Activated CD4-positive, alpha-beta memory T cell treated with anti-CD3 and anti-CD28 coated beads for 36 hours (primary cell): ENCODE measurements at regions of chr9 and their contacts with region 1.

Region 1: GRCh38 chr9:131668439-131669268 is 71.2 kb downstream of the RAPGEF1 start:
- DNase-seq: peak; percentile 86
- H3K4me3 Mint-ChIP-seq: peak overlapping the region; percentile 67
- H3K27ac Mint-ChIP-seq: peak overlapping the region; percentile 99
- H3K4me1 Mint-ChIP-seq: peaks cover 94% of the 10 kb centered on the region
- H3K27me3 Mint-ChIP-seq: no peaks in the 10 kb centered on the region

Region 2: DNA sequence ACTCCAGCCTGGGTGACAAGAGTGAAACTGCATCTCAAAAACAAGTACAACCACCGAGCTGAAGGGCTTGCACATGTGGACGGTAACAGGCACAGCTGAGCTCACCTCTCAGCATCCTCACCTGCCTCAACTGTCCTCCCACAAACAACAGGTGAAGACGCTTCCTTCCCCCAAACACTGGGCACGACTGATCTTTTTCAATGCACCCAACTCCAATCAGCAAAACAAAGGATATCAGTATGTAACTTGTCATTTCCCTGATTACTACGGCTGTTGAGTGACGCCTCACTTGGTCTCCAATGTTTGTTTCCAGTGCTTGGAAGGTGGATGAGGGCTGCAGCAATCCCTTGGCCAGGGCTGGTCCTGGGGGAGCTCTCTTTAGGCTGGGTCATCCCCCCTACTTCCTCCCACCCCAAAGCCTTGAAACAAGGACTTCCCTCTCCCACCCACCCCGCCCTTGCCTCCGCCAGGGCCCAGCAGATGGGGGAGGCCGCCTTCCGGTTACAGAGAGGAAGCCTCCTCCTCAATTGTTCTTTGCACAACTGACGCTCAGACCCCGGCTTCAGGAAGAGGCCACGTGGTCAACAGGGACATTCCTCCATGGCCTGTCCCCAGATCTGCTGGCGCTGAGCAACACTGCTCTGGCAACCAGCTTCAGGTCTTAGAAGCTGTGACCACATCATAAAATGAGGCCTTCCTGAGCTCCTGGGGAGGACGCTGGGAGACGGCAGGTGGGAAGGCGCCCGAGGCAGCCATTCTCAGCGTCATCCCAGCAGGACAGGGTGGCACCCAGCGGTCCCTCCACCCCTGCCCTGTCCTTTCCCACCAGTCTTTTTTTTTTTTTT is 398.3 kb before region 1 on chr9:
- CTCF ChIA-PET with region 1: no interaction called
- POLR2A ChIA-PET with region 1: no interaction called
- intact Hi-C with region 1: loop called (anchors 5 kb)
- DNase-seq: peak; percentile 80
- H3K4me3 Mint-ChIP-seq: peak overlapping the region; percentile 99
- H3K27ac Mint-ChIP-seq: peak overlapping the region; percentile 97
- H3K4me1 Mint-ChIP-seq: peaks cover 56% of the 10 kb centered on the region
- H3K27me3 Mint-ChIP-seq: no peaks in the 10 kb centered on the region

Region 3: GRCh38 chr9:131590908-131591844 is 77.5 kb before region 1 on chr9:
- CTCF ChIA-PET with region 1: interaction called, 5 read pairs
- POLR2A ChIA-PET with region 1: no interaction called
- intact Hi-C with region 1: loop called (anchors 5 kb)
- DNase-seq: peak; percentile 87
- H3K4me3 Mint-ChIP-seq: no peak overlapping the region
- H3K27ac Mint-ChIP-seq: peak overlapping the region; percentile 72
- H3K4me1 Mint-ChIP-seq: peaks cover 27% of the 10 kb centered on the region
- H3K27me3 Mint-ChIP-seq: no peaks in the 10 kb centered on the region

Region 4: GRCh38 chr9:131645078-131645776 is 23.4 kb before region 1 on chr9:
- CTCF ChIA-PET with region 1: interaction called, 13 read pairs
- POLR2A ChIA-PET with region 1: interaction called, 29 read pairs
- intact Hi-C with region 1: loop called (anchors 1 kb)
- DNase-seq: peak; percentile 65
- H3K4me3 Mint-ChIP-seq: peak overlapping the region; percentile 43
- H3K27ac Mint-ChIP-seq: peak overlapping the region; percentile 94
- H3K4me1 Mint-ChIP-seq: peaks cover 68% of the 10 kb centered on the region
- H3K27me3 Mint-ChIP-seq: no peaks in the 10 kb centered on the region

Region 5: DNA sequence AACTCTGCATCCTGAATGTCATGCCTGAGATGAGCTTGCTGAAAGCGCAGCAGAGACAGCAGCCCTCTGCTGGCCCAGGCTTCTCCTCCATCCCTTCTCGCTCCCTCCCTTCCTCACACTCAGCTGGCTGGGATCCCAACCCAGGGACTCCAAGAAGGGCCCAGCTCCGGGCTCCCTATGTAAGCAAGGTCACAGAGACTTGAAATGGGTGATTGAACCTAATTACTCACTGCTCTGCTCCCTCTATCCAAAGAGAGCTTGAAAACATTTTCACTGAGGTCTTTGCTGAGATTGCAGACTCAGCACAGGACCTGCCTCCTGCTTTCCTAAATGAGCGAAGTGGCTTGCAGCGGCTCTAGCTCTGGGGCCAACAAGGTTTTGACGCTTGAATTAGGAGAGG is 28.4 kb after region 1 on chr9:
- CTCF ChIA-PET with region 1: no interaction called
- POLR2A ChIA-PET with region 1: no interaction called
- intact Hi-C with region 1: no loop called
- DNase-seq: no peak
- H3K4me3 Mint-ChIP-seq: no peak overlapping the region
- H3K27ac Mint-ChIP-seq: no peak overlapping the region
- H3K4me1 Mint-ChIP-seq: peaks cover 86% of the 10 kb centered on the region
- H3K27me3 Mint-ChIP-seq: no peaks in the 10 kb centered on the region

Region 6: GRCh38 chr9:131709771-131710454 is 41.3 kb after region 1 on chr9:
- CTCF ChIA-PET with region 1: interaction called, 9 read pairs
- POLR2A ChIA-PET with region 1: interaction called, 30 read pairs
- intact Hi-C with region 1: loop called (anchors 1 kb)
- DNase-seq: peak; percentile 73
- H3K4me3 Mint-ChIP-seq: peak overlapping the region; percentile 62
- H3K27ac Mint-ChIP-seq: peak overlapping the region; percentile 96
- H3K4me1 Mint-ChIP-seq: peaks cover 86% of the 10 kb centered on the region
- H3K27me3 Mint-ChIP-seq: no peaks in the 10 kb centered on the region

Region 7: DNA sequence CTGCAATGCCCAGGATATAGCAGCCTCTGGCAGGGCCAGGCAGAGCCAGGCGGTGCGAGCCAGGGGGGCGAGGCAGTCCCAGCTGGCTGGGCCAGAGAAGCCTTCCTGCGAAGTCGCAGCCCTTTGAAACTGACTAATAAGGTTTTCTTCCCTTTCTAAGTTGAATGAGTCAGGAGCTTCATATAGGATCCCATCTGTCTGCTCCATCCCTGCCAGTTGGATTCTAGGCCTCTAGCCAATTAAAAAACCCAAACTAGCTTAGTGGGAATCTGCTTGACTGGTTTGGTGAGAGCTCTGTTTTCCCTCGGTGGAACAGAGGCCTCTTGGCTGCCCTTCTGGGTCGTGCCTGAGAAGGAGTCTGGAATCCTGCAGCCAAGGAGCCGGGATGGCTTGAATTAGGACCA is 141.3 kb after region 1 on chr9:
- CTCF ChIA-PET with region 1: no interaction called
- POLR2A ChIA-PET with region 1: no interaction called
- intact Hi-C with region 1: no loop called
- DNase-seq: no peak
- H3K4me3 Mint-ChIP-seq: no peak overlapping the region
- H3K27ac Mint-ChIP-seq: no peak overlapping the region
- H3K4me1 Mint-ChIP-seq: no peaks in the 10 kb centered on the region
- H3K27me3 Mint-ChIP-seq: peaks cover 29% of the 10 kb centered on the region

Region 8: GRCh38 chr9:132354637-132355355 is 686.1 kb after region 1 on chr9 and contains the start of gene SETX:
- CTCF ChIA-PET with region 1: no interaction called
- POLR2A ChIA-PET with region 1: no interaction called
- intact Hi-C with region 1: loop called (anchors 10 kb)
- DNase-seq: peak; percentile 97
- H3K4me3 Mint-ChIP-seq: peak within 1 kb of the TSS; percentile 91
- H3K27ac Mint-ChIP-seq: peak within 1 kb of the TSS; percentile 97
- H3K4me1 Mint-ChIP-seq: peaks cover 37% of the 10 kb centered on the region
- H3K27me3 Mint-ChIP-seq: no peaks in the 10 kb centered on the region
- total RNA-seq, gene SETX: 41.6 to 42.3 TPM